ENCODE measurements at regions of chr6 and their contacts with region 1.

Region 1: GRCh38 chr6:15526212-15526701 is 136.6 kb downstream of the DTNBP1 start:
- DNase-seq: no peak
- ATAC-seq: no peak

Region 2: GRCh38 chr6:14721103-14721746 is 805.0 kb before region 1 on chr6:
- intact Hi-C with region 1: loop called (anchors 5 kb)
- DNase-seq: no peak
- ATAC-seq: peak; percentile 55

Region 3: GRCh38 chr6:15936503-15936902 is 410.2 kb after region 1 on chr6:
- intact Hi-C with region 1: no loop called
- DNase-seq: no peak
- ATAC-seq: no peak

Measured in sciatic nerve (tissue), 2 donors.